ENCODE measurements at regions of chr15 and their contacts with region 1.

Region 1: DNA sequence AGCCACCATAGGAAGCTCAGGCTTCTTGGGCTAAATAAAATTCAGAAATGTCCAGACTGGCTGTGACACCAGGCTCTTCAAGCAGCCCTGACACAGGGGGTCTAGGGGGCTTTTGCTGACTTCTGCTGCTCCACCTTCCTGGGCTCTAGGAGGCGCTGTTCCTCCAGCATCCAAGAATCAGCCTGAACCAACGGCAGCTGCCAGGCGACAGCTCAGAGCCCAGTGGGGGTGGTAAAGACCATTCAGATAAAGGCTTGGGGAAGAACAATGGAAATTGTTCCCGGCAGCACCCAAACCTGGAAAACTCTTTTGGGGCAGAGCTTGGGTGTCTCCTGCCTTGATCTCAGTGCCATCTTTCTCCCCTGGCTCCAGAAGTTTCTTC is 21.6 kb upstream of the PSTPIP1 start:
- DNase-seq: peak; percentile 59
- H3K4me3 ChIP-seq: no peak overlapping the region
- H3K27ac ChIP-seq: no peak overlapping the region
- H3K4me1 ChIP-seq: no peaks in the 10 kb centered on the region
- CTCF ChIP-seq: peak; percentile 84

Region 2: DNA sequence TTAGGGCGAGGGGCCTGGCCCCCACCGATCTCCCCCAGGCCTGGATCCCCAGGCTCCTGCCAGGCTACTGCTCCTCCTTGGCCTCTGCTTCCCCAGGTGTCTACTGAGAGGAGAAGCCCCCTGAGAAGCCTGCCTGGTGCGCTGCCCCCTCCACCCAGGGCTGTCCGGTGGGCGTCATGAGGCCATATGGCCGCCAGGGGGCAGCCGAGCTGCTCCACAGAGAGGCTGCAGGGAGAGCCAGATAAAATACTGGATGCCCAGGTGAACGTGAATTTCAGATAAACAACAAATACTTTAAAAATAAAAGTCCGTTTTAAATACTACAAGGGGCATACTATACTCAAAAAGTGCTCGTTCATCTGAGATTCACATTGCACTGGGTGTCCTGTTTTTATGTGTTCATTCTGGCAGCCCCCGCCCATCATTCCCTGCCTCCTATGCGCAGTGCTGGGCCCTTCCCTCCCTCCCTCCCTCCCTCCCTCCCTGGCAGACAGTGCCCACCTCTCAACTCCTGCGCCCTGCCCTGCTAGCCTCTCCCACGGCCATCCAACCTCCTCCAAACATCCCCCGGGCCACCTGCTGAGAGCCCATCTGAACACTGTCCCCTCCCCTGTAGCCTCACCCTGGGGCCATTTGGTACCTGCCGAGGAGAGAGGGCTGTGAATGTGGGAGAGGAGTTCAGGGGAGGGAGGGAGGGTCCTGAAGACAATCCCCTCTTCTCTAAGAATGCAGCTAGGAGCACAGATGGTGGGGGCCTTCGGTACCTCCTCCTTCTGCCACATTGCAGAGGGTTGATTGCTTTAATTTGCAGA is 51.1 kb after region 1 on chr15:
- CTCF ChIA-PET with region 1: no interaction called
- POLR2A ChIA-PET with region 1: no interaction called
- intact Hi-C with region 1: loop called (anchors 5 kb)
- DNase-seq: peak; percentile 71
- H3K4me3 ChIP-seq: no peak overlapping the region
- H3K27ac ChIP-seq: no peak overlapping the region
- H3K4me1 ChIP-seq: peaks cover 14% of the 10 kb centered on the region
- CTCF ChIP-seq: peak; percentile 96

Region 3: DNA sequence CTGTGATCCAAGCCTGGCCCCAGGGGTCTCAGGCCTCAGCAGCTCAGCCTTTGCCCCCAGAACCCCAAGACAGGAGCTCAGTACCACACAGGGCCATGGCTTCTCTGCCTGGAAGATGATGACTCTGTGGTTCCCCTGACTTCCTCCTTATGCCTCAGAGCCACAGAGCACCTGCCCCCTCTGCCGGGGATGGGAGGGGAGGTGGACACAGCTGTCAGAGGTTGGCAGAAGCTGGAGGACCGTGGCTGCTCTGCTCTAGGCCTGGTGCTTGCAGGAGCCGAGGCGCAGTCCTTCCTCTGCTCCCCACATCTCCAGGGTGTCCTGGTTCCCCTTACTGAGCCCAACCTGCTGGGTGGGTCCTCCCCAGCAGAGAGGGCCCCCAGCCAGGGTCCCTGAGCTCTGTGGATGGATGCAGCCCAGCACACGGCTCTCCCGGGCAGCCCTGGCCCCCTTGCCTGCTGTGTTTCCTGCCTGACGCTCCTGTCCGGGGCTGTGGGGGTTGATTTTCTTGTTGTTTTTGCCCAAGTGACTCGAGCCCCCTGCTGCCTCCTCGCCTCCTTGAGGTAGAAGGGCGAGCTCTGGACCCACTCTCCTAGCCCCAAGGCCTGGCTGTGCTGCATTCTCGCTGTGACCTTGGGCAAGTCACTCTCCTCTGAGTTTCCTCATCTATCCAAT is 58.2 kb after region 1 on chr15:
- CTCF ChIA-PET with region 1: interaction called, 3 read pairs
- POLR2A ChIA-PET with region 1: no interaction called
- intact Hi-C with region 1: loop called (anchors 2 kb)
- DNase-seq: peak; percentile 67
- H3K4me3 ChIP-seq: no peak overlapping the region
- H3K27ac ChIP-seq: no peak overlapping the region
- H3K4me1 ChIP-seq: peaks cover 4% of the 10 kb centered on the region
- CTCF ChIP-seq: peak; percentile 39

Region 4: GRCh38 chr15:77107531-77108355 is 134.4 kb after region 1 on chr15:
- CTCF ChIA-PET with region 1: no interaction called
- POLR2A ChIA-PET with region 1: no interaction called
- intact Hi-C with region 1: loop called (anchors 5 kb)
- DNase-seq: peak; percentile 57
- H3K4me3 ChIP-seq: no peak overlapping the region
- H3K27ac ChIP-seq: no peak overlapping the region
- H3K4me1 ChIP-seq: no peaks in the 10 kb centered on the region
- CTCF ChIP-seq: peak; percentile 86

Region 5: GRCh38 chr15:77496710-77497103 is 523.4 kb after region 1 on chr15:
- CTCF ChIA-PET with region 1: no interaction called
- POLR2A ChIA-PET with region 1: no interaction called
- intact Hi-C with region 1: loop called (anchors 5 kb)
- DNase-seq: peak; percentile 65
- H3K4me3 ChIP-seq: no peak overlapping the region
- H3K27ac ChIP-seq: no peak overlapping the region
- H3K4me1 ChIP-seq: peaks cover 22% of the 10 kb centered on the region
- CTCF ChIP-seq: peak; percentile 95